H1 (cell line): ENCODE measurements at regions of chr10 and their contacts with region 1.

Region 1: DNA sequence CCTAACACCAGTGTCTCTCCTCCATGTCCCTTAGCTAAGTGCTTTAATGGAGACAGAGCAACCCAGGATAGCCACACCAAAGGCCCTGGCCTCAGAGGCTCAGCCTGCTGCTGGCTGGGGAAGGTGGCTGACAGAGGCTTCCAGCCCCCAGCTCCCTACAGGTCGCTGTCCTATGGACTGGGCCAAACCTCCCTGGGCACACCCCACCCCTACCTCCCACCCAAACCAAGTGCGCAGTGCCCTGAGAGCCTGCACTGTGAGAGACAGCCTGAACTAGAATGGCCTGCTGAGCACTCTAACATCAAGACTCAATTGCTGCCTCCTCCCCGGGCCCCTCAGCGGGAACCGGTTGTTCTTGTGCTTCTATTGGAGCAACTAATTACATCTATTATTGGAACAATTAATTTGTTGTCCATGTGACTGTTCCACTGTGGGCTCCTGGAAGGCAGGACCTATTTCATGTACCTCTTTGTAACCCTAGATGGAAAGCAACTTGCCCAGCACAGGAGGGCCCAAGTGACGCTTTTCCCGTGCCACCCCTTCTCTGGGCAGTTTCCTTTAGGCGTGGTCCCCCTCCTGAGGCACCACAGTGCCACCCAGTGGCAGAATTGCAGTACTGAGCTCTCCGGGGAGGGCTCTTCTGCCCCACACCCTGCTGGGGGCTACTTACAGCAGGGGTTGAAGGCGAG is 63.6 kb upstream of the WAPL start:
- DNase-seq: peak; percentile 67 to 91
- H3K4me3 ChIP-seq: no peak overlapping the region
- H3K27ac ChIP-seq: no peak overlapping the region
- H3K4me1 ChIP-seq: peaks cover 0 to 2% (median 0%) of the 10 kb centered on the region in 4 experiments; a peak in 1 of 7 replicates
- H3K27me3 ChIP-seq: 0 out of 7 replicates have a peak, but pooled peaks cover 0 to 3% (median 0%) of the 10 kb centered on the region in 4 experiments
- CTCF ChIP-seq: peak; percentile 92 to 97 (median 93)
- EP300 ChIP-seq: no peak
- POLR2A ChIP-seq: no peak
- RAD21 ChIP-seq: peak; percentile 97 to 98

Region 2: DNA sequence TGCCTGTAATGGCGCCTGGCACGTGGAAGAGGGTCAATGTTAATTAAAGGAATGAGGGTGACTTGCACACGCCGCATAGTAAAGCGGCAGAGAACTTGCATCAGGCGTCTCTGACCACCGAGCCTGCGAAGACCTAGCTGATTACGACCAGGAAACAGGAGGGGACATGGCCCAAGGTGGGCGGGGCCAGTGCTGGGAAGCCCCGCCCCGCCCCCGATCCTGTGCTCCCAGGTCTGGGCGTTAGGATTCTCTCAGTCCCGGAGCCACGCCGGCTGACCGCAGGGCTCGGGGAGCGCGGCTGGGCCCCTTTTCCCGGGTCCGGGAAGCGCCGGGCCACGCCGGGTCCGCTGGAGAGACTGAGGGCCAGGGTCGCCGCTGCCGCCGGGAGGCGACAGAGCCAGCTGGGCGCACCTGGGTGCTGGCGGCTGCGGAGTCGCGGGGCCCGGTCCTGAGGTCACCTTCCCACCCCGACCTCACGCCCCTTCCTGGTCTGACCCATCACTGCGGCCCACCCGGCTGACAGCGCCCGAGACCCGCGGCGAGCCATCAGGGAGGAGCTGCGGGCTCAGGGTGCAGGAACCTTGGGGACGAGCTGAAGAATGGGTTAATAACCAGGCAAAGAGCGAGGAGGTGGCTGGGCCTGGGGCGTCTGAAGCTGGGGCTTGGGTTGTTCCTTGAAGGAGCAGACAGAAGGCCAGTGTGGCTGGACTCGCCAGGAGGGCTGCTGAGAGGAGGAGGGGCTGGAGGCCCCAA is 195.6 kb before region 1 on chr10:
- CTCF ChIA-PET with region 1: interaction called, 54 read pairs
- POLR2A ChIA-PET with region 1: no interaction called
- DNase-seq: peak; percentile 69 to 93
- H3K4me3 ChIP-seq: peak overlapping the region; percentile 48 to 75 (median 58)
- H3K27ac ChIP-seq: no peak overlapping the region
- H3K4me1 ChIP-seq: peaks cover 0 to 16% (median 5%) of the 10 kb centered on the region in 4 experiments; a peak in 5 of 7 replicates
- H3K27me3 ChIP-seq: peaks cover 0 to 15% (median 11%) of the 10 kb centered on the region in 4 experiments; a peak in 4 of 7 replicates
- CTCF ChIP-seq: no peak
- EP300 ChIP-seq: no peak
- POLR2A ChIP-seq: peak in 1 of 2 experiments; percentile 78; a peak in 2 of 3 replicates
- RAD21 ChIP-seq: no peak; a peak in 1 of 4 replicates

Region 3: GRCh38 chr10:86498598-86498997 is 86.6 kb before region 1 on chr10:
- CTCF ChIA-PET with region 1: no interaction called
- POLR2A ChIA-PET with region 1: no interaction called
- DNase-seq: no peak
- H3K4me3 ChIP-seq: no peak overlapping the region
- H3K27ac ChIP-seq: no peak overlapping the region
- H3K4me1 ChIP-seq: no peaks in the 10 kb centered on the region
- H3K27me3 ChIP-seq: no peaks in the 10 kb centered on the region
- CTCF ChIP-seq: no peak
- EP300 ChIP-seq: no peak
- POLR2A ChIP-seq: no peak
- RAD21 ChIP-seq: no peak

Region 4: DNA sequence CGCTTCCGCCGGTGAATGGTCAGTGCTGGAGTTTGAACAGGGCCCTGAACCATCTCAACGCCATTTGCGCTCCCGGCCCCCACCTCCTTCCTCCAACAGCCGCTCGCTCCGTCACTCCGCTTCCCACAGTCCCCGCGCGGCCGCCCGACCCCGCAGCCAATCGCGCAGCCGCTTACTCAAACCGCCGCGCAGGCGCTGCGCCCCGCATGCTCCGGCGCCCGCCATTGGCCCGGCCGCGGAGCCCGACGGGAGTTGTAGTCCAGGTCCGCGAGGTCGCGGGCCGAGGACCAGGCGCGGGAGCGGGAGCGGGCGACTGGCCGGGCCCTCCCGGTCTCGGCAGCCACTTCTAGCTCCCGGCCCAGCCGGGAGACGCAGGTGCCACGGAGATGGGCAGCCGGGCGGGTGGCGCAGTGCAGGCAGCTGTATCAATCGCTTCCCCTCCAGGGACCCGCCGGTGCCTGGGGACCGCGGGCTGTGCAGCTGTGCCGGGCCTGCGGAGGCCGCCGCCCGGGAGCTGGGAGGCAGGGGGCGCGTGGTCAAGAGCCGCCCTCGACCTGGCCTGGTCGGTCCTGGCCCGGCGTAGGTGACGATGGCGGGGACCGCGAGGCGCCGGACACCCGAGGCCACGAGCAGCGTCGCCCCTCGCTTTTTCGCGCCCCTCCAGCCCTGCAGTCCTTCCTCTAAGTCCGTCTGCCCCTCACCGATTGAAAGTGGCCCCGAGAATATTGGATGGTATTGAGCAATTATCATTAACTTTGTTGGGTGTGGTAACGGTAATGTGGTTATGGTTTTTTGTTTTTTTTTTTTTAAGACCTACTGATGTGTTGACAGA is 63.3 kb before region 1 on chr10 and contains the start of gene WAPL:
- CTCF ChIA-PET with region 1: interaction called, 28 read pairs
- POLR2A ChIA-PET with region 1: interaction called, 3 read pairs
- DNase-seq: peak; percentile 67 to 95
- H3K4me3 ChIP-seq: peak within 1 kb of the TSS; percentile 76 to 91 (median 82)
- H3K27ac ChIP-seq: peak within 1 kb of the TSS; percentile 71
- H3K4me1 ChIP-seq: peaks cover 0 to 5% (median 2%) of the 10 kb centered on the region in 4 experiments; a peak in 5 of 7 replicates
- H3K27me3 ChIP-seq: no peaks in the 10 kb centered on the region
- CTCF ChIP-seq: no peak
- EP300 ChIP-seq: no peak; a peak in 1 of 3 replicates
- POLR2A ChIP-seq: peak in 1 of 2 experiments; percentile 51; a peak in 1 of 3 replicates
- RAD21 ChIP-seq: no peak
- total RNA-seq, gene WAPL: 48.1 and 49.2 TPM in 2 replicates

Region 5: GRCh38 chr10:86556568-86557276 is 28.5 kb before region 1 on chr10:
- CTCF ChIA-PET with region 1: interaction called, 11 read pairs
- POLR2A ChIA-PET with region 1: no interaction called
- DNase-seq: no peak
- H3K4me3 ChIP-seq: no peak overlapping the region
- H3K27ac ChIP-seq: no peak overlapping the region
- H3K4me1 ChIP-seq: peaks cover 0 to 6% (median 4%) of the 10 kb centered on the region in 4 experiments; a peak in 5 of 7 replicates
- H3K27me3 ChIP-seq: no peaks in the 10 kb centered on the region
- CTCF ChIP-seq: no peak
- EP300 ChIP-seq: no peak
- POLR2A ChIP-seq: no peak
- RAD21 ChIP-seq: no peak

Region 6: GRCh38 chr10:86599729-86600128 is 14.5 kb after region 1 on chr10:
- CTCF ChIA-PET with region 1: interaction called, 22 read pairs
- POLR2A ChIA-PET with region 1: no interaction called
- DNase-seq: peak in 1 of 2 experiments; percentile 55
- H3K4me3 ChIP-seq: peak overlapping the region in 1 of 4 experiments; percentile 21; a peak in 1 of 8 replicates
- H3K27ac ChIP-seq: no peak overlapping the region
- H3K4me1 ChIP-seq: peaks cover 5 to 16% (median 8%) of the 10 kb centered on the region in 4 experiments
- H3K27me3 ChIP-seq: no peaks in the 10 kb centered on the region
- CTCF ChIP-seq: no peak
- EP300 ChIP-seq: no peak
- POLR2A ChIP-seq: no peak
- RAD21 ChIP-seq: no peak